IMR-90 (cell line): ENCODE measurements at regions of chr17 and their contacts with region 1.

Region 1: DNA sequence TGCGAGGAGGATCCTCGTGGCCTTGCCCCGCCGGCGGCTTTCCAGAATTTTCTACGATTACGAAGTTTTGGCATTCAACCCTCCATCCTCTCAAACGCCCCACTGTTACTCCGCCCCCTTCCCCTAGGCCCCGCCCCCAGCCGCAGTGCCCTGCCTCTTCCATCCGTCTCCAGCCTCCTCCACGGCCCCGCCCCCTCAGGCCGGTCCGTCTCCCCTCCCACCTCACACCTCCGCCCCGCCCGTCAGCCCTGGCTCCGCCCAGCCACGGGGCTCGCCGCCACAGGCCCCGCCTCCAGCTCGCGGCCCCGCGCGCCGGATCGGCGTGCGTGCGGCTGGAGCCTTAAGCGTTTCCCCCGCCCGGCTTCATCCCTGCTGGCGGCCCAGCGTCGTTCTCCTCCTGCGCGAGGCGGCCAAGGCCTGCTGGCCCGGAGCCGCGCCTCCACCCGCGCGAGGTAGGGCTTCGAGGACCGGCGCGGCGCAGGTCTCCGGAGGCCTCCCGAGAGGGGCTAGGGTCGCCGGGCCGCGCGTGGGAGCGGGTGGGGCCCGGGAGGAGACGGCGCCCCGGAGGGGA is at the starts of genes C17orf67 and DGKE:
- DNase-seq: peak; percentile 94
- ATAC-seq: peak; percentile 95
- H3K4me3 ChIP-seq: peak within 1 kb of the TSS; percentile 85
- H3K27ac ChIP-seq: peak within 1 kb of the TSS; percentile 57
- H3K4me1 ChIP-seq: peaks cover 8% of the 10 kb centered on the region
- H3K27me3 ChIP-seq: no peaks in the 10 kb centered on the region
- CTCF ChIP-seq: no peak
- POLR2A ChIP-seq: no peak
- RAD21 ChIP-seq: no peak
- total RNA-seq, gene C17orf67: 0.18 and 0.56 TPM in 2 replicates
- total RNA-seq, gene DGKE: 4.7 and 5.0 TPM in 2 replicates

Region 2: DNA sequence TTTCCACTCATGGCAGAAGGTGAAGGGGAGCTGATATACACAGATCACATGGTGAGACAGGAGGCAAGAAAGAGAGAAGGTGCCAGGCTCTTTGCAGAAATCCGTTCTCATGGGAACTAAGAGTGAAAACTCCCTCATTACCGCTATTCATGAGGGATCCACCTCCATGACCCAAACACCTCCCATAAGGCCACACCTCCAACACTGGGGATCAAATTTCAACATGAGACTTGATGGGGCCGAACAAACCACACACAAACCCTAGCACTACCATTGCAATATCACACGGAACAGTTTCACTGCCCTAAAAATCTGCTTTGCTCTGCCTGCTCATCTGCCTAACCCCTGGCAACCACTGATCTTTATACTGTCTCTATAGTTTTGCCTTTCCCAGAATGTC is 35.0 kb before region 1 on chr17:
- CTCF ChIA-PET with region 1: no interaction called
- POLR2A ChIA-PET with region 1: no interaction called
- dilution Hi-C with region 1: no loop called
- in situ Hi-C with region 1: no loop called
- intact Hi-C with region 1: no loop called
- DNase-seq: no peak
- ATAC-seq: no peak; the same call in 1 of the 2 replicates
- H3K4me3 ChIP-seq: no peak overlapping the region
- H3K27ac ChIP-seq: no peak overlapping the region
- H3K4me1 ChIP-seq: peaks cover 2% of the 10 kb centered on the region; the same call in 1 of the 2 replicates
- H3K27me3 ChIP-seq: peaks cover 3% of the 10 kb centered on the region; the same call in 1 of the 2 replicates
- CTCF ChIP-seq: no peak
- POLR2A ChIP-seq: no peak
- RAD21 ChIP-seq: no peak

Region 3: GRCh38 chr17:56851008-56851407 is 17.1 kb after region 1 on chr17:
- CTCF ChIA-PET with region 1: interaction called, 3 read pairs
- POLR2A ChIA-PET with region 1: interaction called, 5 read pairs
- dilution Hi-C with region 1: no loop called
- in situ Hi-C with region 1: no loop called
- intact Hi-C with region 1: loop called (anchors 1 kb)
- DNase-seq: no peak
- ATAC-seq: no peak
- H3K4me3 ChIP-seq: no peak overlapping the region
- H3K27ac ChIP-seq: no peak overlapping the region
- H3K4me1 ChIP-seq: no peaks in the 10 kb centered on the region
- H3K27me3 ChIP-seq: no peaks in the 10 kb centered on the region
- CTCF ChIP-seq: no peak
- POLR2A ChIP-seq: no peak
- RAD21 ChIP-seq: no peak

Region 4: DNA sequence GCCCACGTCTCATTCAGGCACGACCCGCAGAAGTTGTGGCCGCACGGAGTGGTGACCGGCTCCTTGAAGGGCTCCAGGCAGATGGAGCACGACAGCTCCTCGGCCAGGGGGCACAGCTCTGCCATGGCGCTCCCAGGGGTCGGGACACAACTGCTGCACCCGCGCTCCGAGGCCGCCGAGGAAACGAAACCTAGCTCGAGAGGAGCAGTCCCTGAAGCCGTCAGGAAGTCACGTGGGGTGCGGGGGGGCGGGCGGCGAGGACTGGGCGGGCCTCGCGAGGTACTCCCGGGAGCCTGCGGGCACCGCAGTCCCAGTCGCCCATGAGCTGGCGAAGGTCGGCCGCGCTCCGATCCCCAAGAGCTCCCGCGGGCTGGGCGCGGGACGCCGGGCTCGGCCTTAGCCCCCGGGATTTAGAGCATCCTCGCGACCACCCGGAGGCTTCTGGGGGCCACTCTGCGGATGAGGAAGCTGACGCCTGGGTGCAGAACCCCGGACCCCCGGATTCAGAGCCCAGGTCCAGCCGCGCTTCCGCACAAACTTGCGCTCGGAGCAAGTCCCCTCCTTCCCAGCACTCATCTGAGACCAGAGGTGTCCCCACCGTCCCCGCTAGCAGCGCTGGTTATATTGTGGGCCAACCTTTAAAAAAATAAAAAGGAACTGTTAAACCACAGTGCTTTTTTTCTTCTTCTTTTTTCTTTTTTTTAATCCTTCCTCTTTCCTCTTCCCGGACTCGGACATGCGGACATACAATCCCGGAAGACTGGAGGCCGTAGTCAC is 80.2 kb after region 1 on chr17 and contains the start of gene TRIM25:
- CTCF ChIA-PET with region 1: no interaction called
- POLR2A ChIA-PET with region 1: no interaction called
- dilution Hi-C with region 1: no loop called
- in situ Hi-C with region 1: no loop called
- intact Hi-C with region 1: loop called (anchors 1 kb)
- DNase-seq: peak; percentile 82
- ATAC-seq: peak; percentile 86
- H3K4me3 ChIP-seq: peak within 1 kb of the TSS; percentile 92
- H3K27ac ChIP-seq: peak within 1 kb of the TSS; percentile 93
- H3K4me1 ChIP-seq: peaks cover 17% of the 10 kb centered on the region
- H3K27me3 ChIP-seq: no peaks in the 10 kb centered on the region
- CTCF ChIP-seq: no peak
- POLR2A ChIP-seq: peak; percentile 99
- RAD21 ChIP-seq: no peak
- total RNA-seq, gene TRIM25: 25.5 and 28.9 TPM in 2 replicates